Activated naive CD4-positive, alpha-beta T cell treated with anti-CD3 and anti-CD28 coated beads for 36 hours (primary cell): ENCODE measurements at regions of chr22 and their contacts with region 1.

Region 1: GRCh38 chr22:38230108-38230825 is 28.5 kb downstream of the MAFF start:
- DNase-seq: peak; percentile 71
- H3K4me3 Mint-ChIP-seq: no peak overlapping the region
- H3K27ac Mint-ChIP-seq: no peak overlapping the region
- H3K4me1 Mint-ChIP-seq: no peaks in the 10 kb centered on the region
- H3K27me3 Mint-ChIP-seq: no peaks in the 10 kb centered on the region

Region 2: DNA sequence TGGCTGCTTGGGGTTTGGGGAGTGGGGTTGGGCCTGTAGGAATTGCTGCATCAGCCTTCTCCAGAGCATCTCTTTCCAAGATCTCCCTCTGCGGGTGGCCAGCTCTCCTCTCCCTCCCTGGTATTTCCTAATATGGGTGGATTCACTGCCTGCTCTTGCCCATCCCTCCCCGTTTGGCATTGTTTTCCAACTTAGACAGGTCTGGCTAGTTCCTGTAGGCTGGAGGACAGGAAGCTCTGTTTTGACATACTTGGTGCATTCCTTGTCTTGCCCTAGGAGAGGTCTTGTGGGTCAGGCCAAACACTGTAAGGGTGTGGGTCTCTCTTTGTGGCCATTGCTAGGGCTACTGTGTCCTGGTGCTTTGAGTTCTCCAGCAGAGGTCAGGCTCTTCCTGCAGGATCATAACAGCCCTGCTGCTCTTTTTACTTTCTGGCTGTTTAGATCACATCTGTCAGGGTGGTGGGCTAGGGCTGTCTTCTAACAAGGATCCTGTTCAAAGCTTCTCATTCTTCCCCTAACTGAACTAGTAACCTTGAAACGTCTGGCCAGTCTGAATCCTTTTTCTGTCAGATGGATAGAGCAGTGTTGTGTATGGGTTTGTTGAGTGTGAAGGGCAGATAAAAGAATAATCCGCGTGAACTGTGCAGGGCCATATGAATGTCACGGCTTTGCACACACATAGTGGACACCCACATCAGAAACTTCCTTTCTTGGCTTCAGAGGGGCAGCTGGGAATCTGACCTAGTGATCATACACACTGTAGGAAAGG is 342.5 kb before region 1 on chr22:
- CTCF ChIA-PET with region 1: no interaction called
- intact Hi-C with region 1: no loop called
- DNase-seq: no peak
- H3K4me3 Mint-ChIP-seq: no peak overlapping the region
- H3K27ac Mint-ChIP-seq: peak overlapping the region; percentile 5
- H3K4me1 Mint-ChIP-seq: peaks cover 6% of the 10 kb centered on the region
- H3K27me3 Mint-ChIP-seq: no peaks in the 10 kb centered on the region

Region 3: GRCh38 chr22:38051900-38052862 is 178.1 kb before region 1 on chr22:
- CTCF ChIA-PET with region 1: interaction called, 8 read pairs
- intact Hi-C with region 1: loop called (anchors 1 kb)
- DNase-seq: peak; percentile 83
- H3K4me3 Mint-ChIP-seq: no peak overlapping the region
- H3K27ac Mint-ChIP-seq: no peak overlapping the region
- H3K4me1 Mint-ChIP-seq: peaks cover 7% of the 10 kb centered on the region
- H3K27me3 Mint-ChIP-seq: no peaks in the 10 kb centered on the region

Region 4: GRCh38 chr22:38104084-38104483 is 126.2 kb before region 1 on chr22:
- CTCF ChIA-PET with region 1: no interaction called
- intact Hi-C with region 1: loop called (anchors 1 kb)
- DNase-seq: no peak
- H3K4me3 Mint-ChIP-seq: no peak overlapping the region
- H3K27ac Mint-ChIP-seq: no peak overlapping the region
- H3K4me1 Mint-ChIP-seq: no peaks in the 10 kb centered on the region
- H3K27me3 Mint-ChIP-seq: no peaks in the 10 kb centered on the region

Region 5: DNA sequence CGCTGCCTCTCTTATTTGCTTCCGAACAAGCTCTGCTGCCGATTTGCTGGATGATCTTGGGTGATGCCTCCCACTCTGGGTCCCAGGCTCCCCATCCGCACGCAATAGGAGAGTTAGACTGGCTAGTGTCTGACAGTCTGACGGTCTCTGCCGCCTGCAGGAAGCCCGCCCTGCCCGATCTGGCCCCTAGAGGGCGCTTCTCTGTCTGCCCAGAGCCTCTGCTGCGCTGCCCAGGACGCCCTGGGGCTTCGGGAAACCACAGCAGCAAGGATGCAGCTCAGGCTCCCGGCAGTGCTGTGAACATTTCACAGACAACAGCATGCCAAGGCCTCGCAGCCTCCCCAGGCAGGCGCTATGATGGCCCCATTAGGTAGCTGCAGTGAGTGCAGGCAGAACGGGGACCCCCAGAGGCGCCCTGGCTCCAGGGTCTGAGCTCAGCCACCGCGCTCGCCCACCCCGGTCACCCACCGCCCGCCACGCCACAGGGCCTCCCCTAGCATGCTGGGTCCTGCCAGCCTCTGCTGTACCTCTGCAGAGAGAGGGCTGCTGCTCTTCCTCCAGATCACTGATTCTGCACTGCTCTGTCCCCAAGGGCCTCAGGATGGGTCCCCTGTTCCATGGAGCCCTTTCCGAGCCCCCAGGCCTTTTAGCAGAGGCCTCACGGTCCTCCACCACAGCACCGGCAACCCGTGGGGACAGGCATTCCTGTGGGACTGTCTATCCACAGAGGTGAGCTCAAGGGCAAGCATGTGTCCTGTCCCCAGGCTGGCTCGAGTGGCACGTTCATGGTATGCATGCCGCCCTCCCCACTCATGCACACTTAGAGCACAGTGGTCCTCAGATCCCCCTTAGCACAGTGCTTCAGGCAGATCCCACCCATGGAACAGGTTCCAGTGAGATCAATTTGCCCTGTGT is 115.5 kb before region 1 on chr22:
- CTCF ChIA-PET with region 1: interaction called, 20 read pairs
- intact Hi-C with region 1: loop called (anchors 1 kb)
- DNase-seq: peak; percentile 86
- H3K4me3 Mint-ChIP-seq: no peak overlapping the region
- H3K27ac Mint-ChIP-seq: no peak overlapping the region
- H3K4me1 Mint-ChIP-seq: no peaks in the 10 kb centered on the region
- H3K27me3 Mint-ChIP-seq: no peaks in the 10 kb centered on the region